Endothelial cell of umbilical vein (primary cell): ENCODE measurements at regions of chr9 and their contacts with region 1.

Region 1: DNA sequence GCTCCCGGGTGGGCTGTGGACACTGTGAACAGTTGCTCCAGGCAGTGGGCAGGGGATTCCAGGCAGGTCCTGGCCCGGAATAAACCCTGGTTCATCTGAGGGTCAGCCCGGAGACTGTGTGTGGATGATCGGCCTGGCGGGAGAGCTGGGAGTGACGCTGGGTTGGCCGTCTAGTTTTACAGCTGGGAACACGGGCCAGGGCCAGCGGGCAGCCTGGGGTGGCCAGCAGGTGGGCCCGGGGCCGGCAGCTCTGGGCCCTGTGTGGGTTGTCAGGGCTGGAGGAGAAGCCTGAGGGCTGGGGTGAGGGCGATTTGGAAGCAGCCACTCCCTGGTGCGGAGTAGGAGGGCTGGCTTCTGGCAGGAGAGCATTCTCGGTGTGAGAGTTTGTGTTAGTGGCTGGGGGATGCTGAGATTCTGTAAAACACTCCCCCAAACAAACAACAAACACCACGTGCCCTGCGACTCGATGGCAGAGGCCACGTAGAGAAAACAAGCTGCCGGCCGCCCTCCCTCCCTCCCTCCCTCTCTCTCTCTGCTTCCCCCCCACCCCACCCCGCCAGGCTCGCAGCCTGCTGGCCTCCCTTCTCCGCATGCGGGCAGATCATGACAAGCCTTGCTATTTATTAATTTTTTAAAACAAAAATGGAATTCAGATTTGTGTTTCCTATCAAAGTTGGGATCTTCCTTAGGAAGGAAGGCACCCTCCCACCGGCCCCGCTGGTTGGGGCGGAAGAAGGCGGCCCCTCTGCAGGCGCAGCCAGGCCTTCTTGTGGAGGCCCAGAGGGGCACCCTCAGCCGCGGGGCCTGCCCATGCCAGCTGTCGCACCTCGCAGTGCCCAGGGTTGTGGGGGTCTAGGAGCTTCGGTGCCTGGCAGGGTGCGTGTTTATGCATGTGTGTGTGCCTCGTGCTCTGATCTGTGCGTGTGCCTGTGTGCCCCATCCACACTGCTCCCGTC is 49.5 kb downstream of the RXRA start:
- DNase-seq: peak; percentile 44
- H3K4me3 ChIP-seq: no peak overlapping the region
- H3K27ac ChIP-seq: peak overlapping the region; percentile 63
- H3K4me1 ChIP-seq: peaks cover 36% of the 10 kb centered on the region
- H3K27me3 ChIP-seq: no peaks in the 10 kb centered on the region
- CTCF ChIP-seq: peak in 1 of 2 donors; percentile 5
- POLR2A ChIP-seq: no peak

Region 2: DNA sequence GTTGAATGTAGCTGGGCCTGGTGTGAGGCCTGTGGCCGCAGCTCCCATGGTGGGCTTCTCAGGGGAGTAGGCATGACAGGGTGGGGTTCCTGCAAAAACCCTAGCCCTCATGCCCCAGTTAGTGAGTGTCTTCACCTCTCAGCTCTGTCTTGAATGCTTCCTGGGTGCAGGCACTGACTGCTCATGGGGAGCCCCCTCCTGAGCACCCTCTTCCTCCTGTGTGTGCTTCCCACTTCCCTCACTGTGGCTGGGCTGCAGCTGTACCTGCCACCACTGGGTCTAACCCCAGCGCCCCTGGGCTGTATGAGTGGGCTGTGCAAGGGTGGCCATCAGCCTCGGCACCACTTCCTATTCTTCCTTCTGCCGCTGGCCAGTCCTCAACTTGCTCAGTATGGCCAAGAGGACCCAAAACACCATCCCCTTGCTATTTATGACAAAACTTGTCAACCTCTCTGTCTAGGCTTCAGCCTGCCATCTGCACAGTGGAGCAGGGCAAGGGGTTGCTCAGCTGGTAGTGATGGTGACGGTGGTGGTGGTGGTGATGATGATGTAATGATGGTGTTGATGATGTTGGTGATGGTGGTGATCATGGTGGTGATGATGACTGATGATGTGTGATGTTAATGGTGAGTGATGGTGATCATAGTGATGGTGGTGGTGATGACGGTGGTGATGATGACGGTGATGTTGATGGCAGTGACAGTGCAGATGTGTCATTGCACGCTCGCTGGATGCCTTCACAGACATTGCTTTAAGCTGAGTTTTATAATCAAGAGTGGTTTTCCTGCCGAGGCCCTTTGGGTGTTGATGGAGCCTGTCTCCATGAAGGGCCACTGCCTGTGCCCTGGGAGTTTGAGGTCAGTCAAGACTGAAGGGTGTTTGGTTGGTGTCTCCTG is 18.1 kb after region 1 on chr9:
- CTCF ChIA-PET with region 1: interaction called, 5 read pairs
- POLR2A ChIA-PET with region 1: no interaction called
- dilution Hi-C with region 1: no loop called
- intact Hi-C with region 1: loop called (anchors 1 kb)
- DNase-seq: no peak
- H3K4me3 ChIP-seq: no peak overlapping the region
- H3K27ac ChIP-seq: peak overlapping the region; percentile 42
- H3K4me1 ChIP-seq: peaks cover 58% of the 10 kb centered on the region
- H3K27me3 ChIP-seq: no peaks in the 10 kb centered on the region
- CTCF ChIP-seq: no peak
- POLR2A ChIP-seq: no peak